GM12878 (cell line): ENCODE measurements at regions of chr5 and their contacts with region 1.

Region 1: GRCh38 chr5:112717506-112718082 is 20.1 kb upstream of the APC start:
- DNase-seq: no peak
- ATAC-seq: no peak
- H3K4me3 ChIP-seq: no peak overlapping the region
- H3K27ac ChIP-seq: no peak overlapping the region
- H3K4me1 ChIP-seq: no peaks in the 10 kb centered on the region
- H3K27me3 ChIP-seq: no peaks in the 10 kb centered on the region
- CTCF ChIP-seq: no peak
- EP300 ChIP-seq: no peak
- POLR2A ChIP-seq: no peak
- RAD21 ChIP-seq: no peak

Region 2: DNA sequence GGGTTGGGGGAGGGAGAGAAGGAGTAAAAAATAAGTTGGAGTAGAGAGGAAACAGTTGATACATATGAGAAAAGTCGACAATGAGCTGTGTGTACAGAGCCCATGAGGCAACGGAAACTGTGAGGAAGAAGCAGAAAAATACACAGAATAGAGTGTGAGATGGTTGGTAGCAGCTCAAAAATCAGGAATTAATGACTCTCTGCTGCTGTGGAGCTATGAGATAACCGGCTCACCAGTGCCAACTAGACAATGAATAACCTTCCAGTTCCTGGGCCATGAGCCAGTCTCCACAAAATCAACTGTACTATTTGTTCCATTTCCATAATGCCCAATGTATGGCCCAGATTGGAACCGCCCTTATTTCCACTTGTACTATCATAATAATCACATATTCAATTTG is 907.5 kb before region 1 on chr5:
- CTCF ChIA-PET with region 1: no interaction called
- POLR2A ChIA-PET with region 1: no interaction called
- RAD21 ChIA-PET with region 1: no interaction called
- SMC1A ChIA-PET with region 1: no interaction called
- in situ Hi-C with region 1: no loop called
- intact Hi-C with region 1: no loop called
- DNase-seq: no peak
- ATAC-seq: no peak
- H3K4me3 ChIP-seq: no peak overlapping the region
- H3K27ac ChIP-seq: no peak overlapping the region
- H3K4me1 ChIP-seq: no peaks in the 10 kb centered on the region
- H3K27me3 ChIP-seq: no peaks in the 10 kb centered on the region
- CTCF ChIP-seq: no peak
- EP300 ChIP-seq: no peak
- POLR2A ChIP-seq: no peak
- RAD21 ChIP-seq: no peak

Region 3: GRCh38 chr5:112563169-112563826 is 154.3 kb before region 1 on chr5:
- CTCF ChIA-PET with region 1: no interaction called
- POLR2A ChIA-PET with region 1: no interaction called
- RAD21 ChIA-PET with region 1: no interaction called
- SMC1A ChIA-PET with region 1: no interaction called
- in situ Hi-C with region 1: no loop called
- intact Hi-C with region 1: no loop called
- DNase-seq: no peak
- ATAC-seq: no peak
- H3K4me3 ChIP-seq: no peak overlapping the region
- H3K27ac ChIP-seq: no peak overlapping the region
- H3K4me1 ChIP-seq: no peaks in the 10 kb centered on the region
- H3K27me3 ChIP-seq: no peaks in the 10 kb centered on the region
- CTCF ChIP-seq: no peak
- EP300 ChIP-seq: no peak
- POLR2A ChIP-seq: no peak
- RAD21 ChIP-seq: no peak

Region 4: DNA sequence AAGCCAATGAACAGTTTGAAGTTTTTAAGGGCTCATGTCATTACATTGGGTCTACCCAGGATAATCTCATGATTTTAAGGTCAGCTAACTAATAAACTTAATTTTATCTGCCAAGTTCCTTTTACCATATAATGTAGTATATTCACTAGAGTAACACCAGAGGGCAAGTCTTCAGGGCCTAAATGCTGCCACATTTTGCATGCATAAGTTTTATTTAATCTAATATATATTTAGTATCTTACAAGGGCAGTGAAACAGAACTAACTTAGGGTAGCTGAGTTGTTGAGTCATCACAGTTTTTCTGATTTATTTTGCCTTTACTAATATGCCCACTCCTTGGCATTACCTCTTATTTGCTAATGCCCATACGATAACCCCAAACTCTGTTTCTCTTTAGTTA is 12.0 kb after region 1 on chr5:
- CTCF ChIA-PET with region 1: interaction called, 5 read pairs
- POLR2A ChIA-PET with region 1: interaction called, 5 read pairs
- RAD21 ChIA-PET with region 1: interaction called, 3 read pairs
- SMC1A ChIA-PET with region 1: interaction called, 11 read pairs
- in situ Hi-C with region 1: no loop called
- intact Hi-C with region 1: no loop called
- DNase-seq: no peak
- ATAC-seq: no peak
- H3K4me3 ChIP-seq: no peak overlapping the region
- H3K27ac ChIP-seq: no peak overlapping the region
- H3K4me1 ChIP-seq: no peaks in the 10 kb centered on the region
- H3K27me3 ChIP-seq: no peaks in the 10 kb centered on the region
- CTCF ChIP-seq: no peak
- EP300 ChIP-seq: no peak
- POLR2A ChIP-seq: no peak
- RAD21 ChIP-seq: no peak

Region 5: GRCh38 chr5:112811023-112811422 is 93.4 kb after region 1 on chr5:
- CTCF ChIA-PET with region 1: no interaction called
- POLR2A ChIA-PET with region 1: no interaction called
- RAD21 ChIA-PET with region 1: no interaction called
- SMC1A ChIA-PET with region 1: no interaction called
- in situ Hi-C with region 1: no loop called
- intact Hi-C with region 1: no loop called
- DNase-seq: no peak
- ATAC-seq: no peak
- H3K4me3 ChIP-seq: no peak overlapping the region
- H3K27ac ChIP-seq: no peak overlapping the region
- H3K4me1 ChIP-seq: no peaks in the 10 kb centered on the region
- H3K27me3 ChIP-seq: no peaks in the 10 kb centered on the region
- CTCF ChIP-seq: no peak
- EP300 ChIP-seq: no peak
- POLR2A ChIP-seq: no peak
- RAD21 ChIP-seq: no peak